ENCODE measurements at regions of chr6 and their contacts with region 1.

Region 1: DNA sequence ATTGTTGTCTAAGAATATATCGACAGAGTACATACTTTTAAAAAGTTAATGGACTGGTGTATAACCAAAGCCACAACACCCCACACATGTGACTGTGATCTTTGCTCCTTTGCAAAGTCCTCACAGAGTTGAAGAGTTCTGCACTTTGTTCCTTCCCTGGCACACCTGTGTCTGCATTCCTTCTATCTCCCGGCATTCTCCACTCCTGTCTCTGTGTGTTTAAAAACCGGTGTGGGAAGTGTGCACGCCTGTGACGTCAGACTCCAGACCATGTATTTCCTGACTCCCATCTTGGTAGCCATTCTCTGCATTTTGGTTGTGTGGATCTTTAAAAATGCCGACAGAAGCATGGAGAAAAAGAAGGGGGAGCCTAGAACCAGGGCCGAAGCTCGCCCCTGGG is at the start of gene IYD:
- DNase-seq: peak; percentile 84 to 90
- H3K4me3 ChIP-seq: peak within 1 kb of the TSS; percentile 5; the same call in 1 of the 2 replicates
- H3K4me3 Mint-ChIP-seq: no peak within 1 kb of the TSS
- H3K27ac Mint-ChIP-seq: no peak within 1 kb of the TSS
- H3K4me1 ChIP-seq: peaks cover 18% of the 10 kb centered on the region
- H3K4me1 Mint-ChIP-seq: no peaks in the 10 kb centered on the region
- H3K27me3 ChIP-seq: no peaks in the 10 kb centered on the region
- H3K27me3 Mint-ChIP-seq: no peaks in the 10 kb centered on the region
- CTCF ChIP-seq: no peak
- total RNA-seq, gene IYD: 26.5 and 32.6 TPM in 2 replicates

Region 2: DNA sequence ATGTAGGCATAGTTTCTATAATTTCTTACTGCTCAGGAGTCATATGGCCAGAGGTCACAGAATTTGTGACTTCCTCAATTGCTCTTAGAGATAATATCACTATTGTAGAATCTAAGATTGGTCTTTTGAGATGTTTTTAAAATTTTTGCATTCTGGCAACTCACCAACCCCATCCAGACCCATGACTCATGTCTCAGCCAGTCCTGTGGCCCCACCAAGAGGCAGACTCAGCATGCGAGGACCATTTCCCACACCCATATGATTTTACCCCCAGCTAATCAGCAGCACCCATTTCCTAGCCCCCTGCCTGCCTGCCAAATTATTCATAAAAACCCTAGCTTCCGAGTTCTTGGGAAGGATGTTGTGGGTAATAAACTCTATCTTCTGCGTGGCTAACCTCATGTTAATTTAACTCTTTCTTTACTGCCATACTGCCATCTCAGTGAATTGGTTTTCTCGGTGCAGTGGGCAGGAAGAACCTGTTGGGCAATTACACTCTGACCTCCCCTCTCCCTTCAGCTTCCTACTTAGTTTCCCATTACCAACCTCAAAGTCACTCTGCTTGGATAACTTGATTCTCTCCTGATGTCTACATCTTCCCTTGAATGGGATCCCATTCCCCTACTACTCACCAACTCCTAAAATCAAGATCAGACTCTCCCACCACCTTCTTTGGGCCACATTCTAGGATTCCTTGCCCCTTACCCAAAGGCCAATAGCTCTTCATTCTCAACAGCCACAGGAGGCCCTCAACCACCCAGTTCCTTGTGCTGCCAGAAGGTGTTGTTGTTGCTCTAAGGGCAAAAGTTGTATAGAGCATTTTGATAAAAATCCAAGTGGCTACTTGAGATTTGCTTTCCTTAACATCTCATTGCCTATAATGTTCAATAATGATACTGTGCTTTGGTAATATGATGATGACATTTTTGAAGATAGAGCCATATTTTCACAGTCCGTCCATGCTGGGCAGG is 16.2 kb before region 1 on chr6:
- CTCF ChIA-PET with region 1: interaction called, 3 read pairs
- POLR2A ChIA-PET with region 1: interaction called, 9 read pairs
- intact Hi-C with region 1: loop called (anchors 1 kb)
- DNase-seq: no peak
- H3K4me3 ChIP-seq: no peak overlapping the region
- H3K4me3 Mint-ChIP-seq: no peak overlapping the region
- H3K27ac Mint-ChIP-seq: no peak overlapping the region
- H3K4me1 ChIP-seq: peaks cover 24% of the 10 kb centered on the region
- H3K4me1 Mint-ChIP-seq: peaks cover 18% of the 10 kb centered on the region
- H3K27me3 ChIP-seq: no peaks in the 10 kb centered on the region
- H3K27me3 Mint-ChIP-seq: no peaks in the 10 kb centered on the region
- CTCF ChIP-seq: no peak

Region 3: GRCh38 chr6:150382171-150382570 is 13.4 kb after region 1 on chr6:
- CTCF ChIA-PET with region 1: no interaction called
- POLR2A ChIA-PET with region 1: no interaction called
- intact Hi-C with region 1: no loop called
- DNase-seq: no peak
- H3K4me3 ChIP-seq: no peak overlapping the region
- H3K4me3 Mint-ChIP-seq: no peak overlapping the region
- H3K27ac Mint-ChIP-seq: no peak overlapping the region
- H3K4me1 ChIP-seq: peaks cover 6% of the 10 kb centered on the region
- H3K4me1 Mint-ChIP-seq: peaks cover 7% of the 10 kb centered on the region
- H3K27me3 ChIP-seq: no peaks in the 10 kb centered on the region
- H3K27me3 Mint-ChIP-seq: no peaks in the 10 kb centered on the region
- CTCF ChIP-seq: no peak